ENCODE measurements at regions of chr11 and their contacts with region 1.

Region 1: GRCh38 chr11:57562596-57562995 is 4.9 kb downstream of the UBE2L6 start:
- DNase-seq: no peak
- H3K4me3 ChIP-seq: no peak overlapping the region
- H3K27ac ChIP-seq: peak overlapping the region in 1 of 8 donors; percentile 7
- H3K4me1 ChIP-seq: peaks cover 16 to 76% (median 57%) of the 10 kb centered on the region in 6 donors
- H3K27me3 ChIP-seq: no peaks in the 10 kb centered on the region
- CTCF ChIP-seq: no peak
- POLR2A ChIP-seq: no peak

Region 2: GRCh38 chr11:56207796-56208195 is 1354.8 kb before region 1 on chr11:
- intact Hi-C with region 1: no loop called
- DNase-seq: no peak
- H3K4me3 ChIP-seq: no peak overlapping the region
- H3K27ac ChIP-seq: no peak overlapping the region
- H3K4me1 ChIP-seq: no peaks in the 10 kb centered on the region
- H3K27me3 ChIP-seq: no peaks in the 10 kb centered on the region
- CTCF ChIP-seq: no peak
- POLR2A ChIP-seq: no peak

Region 3: DNA sequence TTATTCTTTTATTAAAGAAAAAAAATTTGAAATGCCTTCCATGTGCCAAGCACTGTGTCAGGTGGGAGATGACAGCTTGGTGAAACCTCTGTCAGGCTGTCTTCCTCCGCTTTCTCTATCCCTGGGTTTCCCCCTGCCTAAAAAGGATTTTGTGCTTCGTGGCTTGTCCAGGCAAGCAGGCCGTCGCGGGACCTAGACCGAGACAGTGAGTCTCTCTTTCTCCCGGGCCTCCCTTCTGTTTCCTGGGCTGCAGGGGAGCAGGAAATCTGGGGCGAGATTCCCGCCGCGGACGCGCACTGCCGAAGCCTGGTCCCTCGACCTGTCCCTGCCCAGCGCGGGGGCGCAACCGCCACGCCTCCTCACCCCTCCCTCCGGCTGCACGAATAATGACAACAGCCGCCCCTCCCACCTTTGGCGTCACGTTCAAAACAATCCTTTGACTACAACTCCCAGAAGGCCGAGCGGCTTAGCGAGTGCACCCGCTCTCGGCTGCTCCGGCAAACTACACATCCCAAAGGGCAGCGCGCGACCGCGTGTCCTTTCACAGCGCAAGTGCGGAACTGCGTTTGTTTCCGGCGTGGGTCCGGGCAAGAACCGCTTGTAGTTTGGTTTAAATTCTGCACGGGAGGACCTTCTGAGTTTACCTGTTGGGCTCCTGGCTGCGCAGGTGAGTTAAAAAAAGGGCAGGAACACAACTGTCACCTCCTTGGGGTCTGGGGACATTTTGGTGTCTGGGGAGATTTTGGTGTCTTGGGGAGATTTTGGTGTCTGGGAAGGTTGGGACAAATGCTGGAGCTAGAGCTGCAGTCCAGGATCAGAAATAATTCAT is 94.8 kb after region 1 on chr11 and contains the start of gene CLP1:
- intact Hi-C with region 1: loop called (anchors 5 kb)
- DNase-seq: peak; percentile 99
- H3K4me3 ChIP-seq: peak within 1 kb of the TSS; percentile 54 to 85 (median 70)
- H3K27ac ChIP-seq: peak within 1 kb of the TSS; percentile 77 to 94 (median 90)
- H3K4me1 ChIP-seq: peaks cover 11 to 69% (median 31%) of the 10 kb centered on the region in 6 donors
- H3K27me3 ChIP-seq: no peaks in the 10 kb centered on the region
- CTCF ChIP-seq: peak in 5 of 11 experiments; percentile 14 to 59 (median 32)
- POLR2A ChIP-seq: peak in 1 of 3 donors; percentile 55
- total RNA-seq, gene CLP1: 10.5 to 21.6 (median 14.6) TPM

Measured in spleen (tissue), 13 donors.